Activated naive CD4-positive, alpha-beta T cell treated with anti-CD3 and anti-CD28 coated beads for 36 hours (primary cell): ENCODE measurements at regions of chr1 and their contacts with region 1.

Region 1: GRCh38 chr1:182851825-182852224 is 12.7 kb downstream of the DHX9 start:
- DNase-seq: no peak
- H3K4me3 Mint-ChIP-seq: no peak overlapping the region
- H3K27ac Mint-ChIP-seq: no peak overlapping the region
- H3K4me1 Mint-ChIP-seq: peaks cover 44% of the 10 kb centered on the region
- H3K27me3 Mint-ChIP-seq: no peaks in the 10 kb centered on the region

Region 2: DNA sequence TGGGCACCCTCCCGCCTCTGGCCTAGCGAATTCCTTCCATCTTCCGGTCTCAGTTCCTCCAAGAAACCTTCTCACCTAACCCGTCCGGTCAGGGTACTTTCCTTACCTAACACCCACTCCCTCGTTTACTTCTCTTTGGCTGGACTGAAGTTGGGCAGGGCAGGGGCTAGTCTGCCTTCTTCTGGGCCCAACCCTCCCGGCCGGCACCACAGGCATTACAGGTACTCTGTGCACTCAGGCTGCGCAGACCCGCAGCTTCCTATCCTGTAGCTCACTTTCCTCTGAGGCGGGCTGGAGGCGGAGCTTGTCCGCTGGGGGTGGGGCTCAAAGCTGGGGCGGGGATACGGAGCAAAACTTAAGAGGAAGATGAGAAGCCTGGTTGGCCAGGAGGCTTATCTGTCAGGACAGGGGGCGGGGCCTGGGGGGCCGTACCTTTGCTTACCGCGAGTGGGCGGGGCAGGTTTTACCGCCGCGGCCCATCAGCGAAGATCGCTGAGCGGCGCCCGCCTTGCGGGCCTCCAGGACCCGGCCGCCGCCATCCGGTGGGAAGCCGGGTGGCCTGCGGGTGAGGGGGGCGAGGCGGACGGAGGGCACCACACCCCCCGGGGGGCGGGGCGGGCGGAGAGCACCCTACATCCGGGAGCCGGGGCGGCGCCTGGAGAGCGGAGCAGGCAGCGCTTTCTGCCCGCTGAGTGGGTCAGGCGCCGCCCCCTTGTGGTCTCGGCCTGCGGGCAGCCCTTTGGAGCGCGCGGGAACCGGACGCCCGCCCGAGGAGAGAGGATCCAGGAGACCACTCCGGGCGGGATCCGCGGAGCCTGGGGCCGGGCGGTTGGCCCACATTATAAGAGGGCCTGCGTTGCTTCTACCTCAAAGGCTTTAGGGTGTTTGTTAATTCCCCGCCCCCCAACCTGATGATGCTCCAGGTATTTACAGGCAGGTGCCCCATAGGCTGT is 822.2 kb before region 1 on chr1:
- CTCF ChIA-PET with region 1: no interaction called
- intact Hi-C with region 1: no loop called
- DNase-seq: peak; percentile 99
- H3K4me3 Mint-ChIP-seq: peak overlapping the region; percentile 95
- H3K27ac Mint-ChIP-seq: peak overlapping the region; percentile 95
- H3K4me1 Mint-ChIP-seq: peaks cover 9% of the 10 kb centered on the region
- H3K27me3 Mint-ChIP-seq: no peaks in the 10 kb centered on the region

Region 3: DNA sequence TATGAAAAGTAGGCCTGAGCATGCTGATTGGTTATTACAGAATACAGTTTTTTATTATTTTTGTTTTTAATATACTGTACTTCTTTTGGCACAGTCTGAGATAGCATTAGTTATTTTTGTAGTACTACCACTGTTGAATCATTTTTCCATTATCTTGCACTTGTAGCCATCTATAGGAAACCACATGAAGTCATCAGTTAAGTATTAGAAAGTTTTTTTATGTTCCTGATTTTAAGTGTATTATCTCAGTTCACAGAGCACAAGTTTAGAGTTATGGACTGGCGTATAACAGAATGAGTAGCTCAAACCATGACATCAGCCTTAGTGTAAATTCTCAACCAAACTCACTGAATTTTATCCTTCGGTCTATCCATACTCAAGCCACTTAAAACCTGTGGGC is 10.2 kb after region 1 on chr1:
- CTCF ChIA-PET with region 1: no interaction called
- intact Hi-C with region 1: loop called (anchors 1 kb)
- DNase-seq: no peak
- H3K4me3 Mint-ChIP-seq: no peak overlapping the region
- H3K27ac Mint-ChIP-seq: peak overlapping the region; percentile 62
- H3K4me1 Mint-ChIP-seq: peaks cover 52% of the 10 kb centered on the region
- H3K27me3 Mint-ChIP-seq: no peaks in the 10 kb centered on the region

Region 4: DNA sequence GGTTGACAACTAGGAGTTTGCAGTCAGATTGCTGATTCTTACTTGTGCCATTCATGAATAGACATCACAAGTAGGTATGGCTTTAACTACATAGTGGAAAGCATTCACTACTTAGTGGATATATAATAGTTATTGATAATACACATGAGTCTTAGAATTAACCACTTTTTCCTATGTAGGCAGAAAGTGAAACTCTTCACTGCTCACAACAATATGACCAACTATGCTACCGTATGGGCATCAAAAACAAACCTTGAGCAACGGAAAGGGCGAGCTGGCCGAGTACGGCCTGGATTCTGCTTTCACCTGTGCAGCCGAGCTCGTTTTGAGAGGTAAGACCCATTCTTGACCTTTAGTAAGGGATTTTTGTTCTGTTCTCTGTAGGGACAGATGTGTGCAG is 26.0 kb after region 1 on chr1:
- CTCF ChIA-PET with region 1: no interaction called
- intact Hi-C with region 1: no loop called
- DNase-seq: no peak
- H3K4me3 Mint-ChIP-seq: no peak overlapping the region
- H3K27ac Mint-ChIP-seq: peak overlapping the region; percentile 50
- H3K4me1 Mint-ChIP-seq: peaks cover 28% of the 10 kb centered on the region
- H3K27me3 Mint-ChIP-seq: no peaks in the 10 kb centered on the region